ENCODE measurements at regions of chr9 and their contacts with region 1.

Region 1: DNA sequence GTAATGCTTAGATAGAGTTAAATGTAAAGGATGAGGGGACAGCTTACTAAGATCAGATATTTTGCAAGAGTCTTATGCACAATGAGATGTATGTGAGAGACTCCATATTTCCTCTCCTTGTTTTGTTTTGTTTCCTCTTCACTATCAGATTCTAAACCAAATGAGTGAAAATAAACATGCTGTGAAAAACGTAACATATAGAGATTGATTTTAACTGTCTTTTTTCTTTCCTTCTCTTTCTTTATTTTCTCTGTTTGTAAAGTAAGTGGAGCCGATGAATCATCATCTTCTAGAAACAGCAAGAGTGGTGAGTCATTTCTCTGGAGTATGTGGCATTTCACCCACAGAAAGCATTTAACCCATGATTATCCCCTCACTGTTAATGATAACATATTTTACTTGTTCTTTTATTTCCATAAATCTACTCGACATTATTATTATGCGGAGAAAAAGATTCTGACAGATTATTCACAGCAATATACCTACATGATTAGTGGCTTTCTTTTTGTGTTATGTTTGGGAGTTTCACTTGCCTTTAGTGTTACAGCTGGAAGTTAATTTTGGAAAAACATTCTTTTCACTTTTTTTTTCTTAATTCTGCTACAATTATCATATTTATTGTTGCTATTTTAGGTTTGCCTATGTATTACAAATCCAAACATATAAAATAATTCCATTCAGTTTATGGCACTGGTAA is 2.1 kb upstream of the ANXA1 start:
- DNase-seq: no peak
- H3K4me3 Mint-ChIP-seq: peak overlapping the region; percentile 68
- H3K27ac Mint-ChIP-seq: peak overlapping the region; percentile 95
- H3K4me1 Mint-ChIP-seq: peaks cover 77% of the 10 kb centered on the region
- H3K27me3 Mint-ChIP-seq: no peaks in the 10 kb centered on the region

Region 2: GRCh38 chr9:71783120-71783530 is 1366.4 kb before region 1 on chr9:
- intact Hi-C with region 1: loop called (anchors 2 kb)
- DNase-seq: peak; percentile 80
- H3K4me3 Mint-ChIP-seq: peak overlapping the region; percentile 63
- H3K27ac Mint-ChIP-seq: peak overlapping the region; percentile 93
- H3K4me1 Mint-ChIP-seq: peaks cover 42% of the 10 kb centered on the region
- H3K27me3 Mint-ChIP-seq: peaks cover 2% of the 10 kb centered on the region

Region 3: GRCh38 chr9:72473474-72474261 is 675.9 kb before region 1 on chr9:
- intact Hi-C with region 1: loop called (anchors 10 kb)
- DNase-seq: no peak
- H3K4me3 Mint-ChIP-seq: peak overlapping the region; percentile 60
- H3K27ac Mint-ChIP-seq: peak overlapping the region; percentile 90
- H3K4me1 Mint-ChIP-seq: peaks cover 64% of the 10 kb centered on the region
- H3K27me3 Mint-ChIP-seq: no peaks in the 10 kb centered on the region

Region 4: DNA sequence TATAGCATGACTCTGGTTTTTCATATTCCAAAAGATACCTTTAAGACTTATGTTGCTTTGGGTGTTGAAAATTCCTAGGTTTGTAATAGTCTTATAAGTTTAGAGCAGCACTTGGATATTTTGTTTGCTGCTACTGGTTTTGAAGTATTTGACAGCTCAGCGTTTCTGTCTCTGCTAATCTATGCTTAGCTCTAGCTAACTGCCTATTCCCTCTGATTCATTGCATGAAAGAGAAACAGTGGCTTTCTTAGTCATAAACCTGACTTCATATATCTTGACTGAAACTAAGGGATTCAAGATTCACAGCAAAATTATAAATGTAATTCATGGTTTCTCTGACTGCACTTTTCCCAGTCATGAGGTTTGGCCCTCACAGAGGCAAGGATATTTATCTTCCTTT is 33.5 kb before region 1 on chr9:
- intact Hi-C with region 1: loop called (anchors 1 kb)
- DNase-seq: no peak
- H3K4me3 Mint-ChIP-seq: no peak overlapping the region
- H3K27ac Mint-ChIP-seq: no peak overlapping the region
- H3K4me1 Mint-ChIP-seq: peaks cover 38% of the 10 kb centered on the region
- H3K27me3 Mint-ChIP-seq: peaks cover 2% of the 10 kb centered on the region

Region 5: DNA sequence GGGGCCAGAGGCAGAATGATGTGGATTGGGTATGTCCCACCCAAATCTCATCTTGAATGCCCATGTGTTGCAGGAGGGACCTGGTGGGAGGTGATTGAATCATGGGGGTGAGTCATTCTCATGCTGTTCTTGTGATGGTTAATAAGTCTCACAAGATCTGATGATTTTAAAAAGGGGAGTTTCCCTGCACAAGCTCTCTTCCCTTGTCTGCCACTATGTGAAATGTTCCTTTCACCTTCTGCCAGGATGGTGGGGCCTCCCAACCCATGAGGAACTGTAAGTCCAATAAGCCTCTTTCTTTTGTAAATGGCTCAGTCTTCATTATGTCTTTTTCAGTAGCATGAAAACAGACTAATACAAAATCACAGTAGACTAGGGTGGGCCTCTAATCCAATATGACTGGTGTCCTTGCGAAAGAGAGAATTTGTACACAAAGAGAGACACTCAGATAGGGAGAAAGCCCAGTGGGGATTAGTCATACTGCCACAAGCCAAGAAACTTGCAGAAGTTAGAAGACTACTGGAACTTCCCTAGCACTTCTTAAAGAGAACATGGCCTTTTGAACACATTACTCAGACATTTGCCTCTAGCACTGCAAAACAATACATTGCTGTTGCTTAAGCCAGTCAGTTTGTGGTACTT is 70.6 kb after region 1 on chr9:
- intact Hi-C with region 1: loop called (anchors 1 kb)
- DNase-seq: no peak
- H3K4me3 Mint-ChIP-seq: no peak overlapping the region
- H3K27ac Mint-ChIP-seq: peak overlapping the region; percentile 78
- H3K4me1 Mint-ChIP-seq: peaks cover 9% of the 10 kb centered on the region
- H3K27me3 Mint-ChIP-seq: peaks cover 7% of the 10 kb centered on the region

Region 6: DNA sequence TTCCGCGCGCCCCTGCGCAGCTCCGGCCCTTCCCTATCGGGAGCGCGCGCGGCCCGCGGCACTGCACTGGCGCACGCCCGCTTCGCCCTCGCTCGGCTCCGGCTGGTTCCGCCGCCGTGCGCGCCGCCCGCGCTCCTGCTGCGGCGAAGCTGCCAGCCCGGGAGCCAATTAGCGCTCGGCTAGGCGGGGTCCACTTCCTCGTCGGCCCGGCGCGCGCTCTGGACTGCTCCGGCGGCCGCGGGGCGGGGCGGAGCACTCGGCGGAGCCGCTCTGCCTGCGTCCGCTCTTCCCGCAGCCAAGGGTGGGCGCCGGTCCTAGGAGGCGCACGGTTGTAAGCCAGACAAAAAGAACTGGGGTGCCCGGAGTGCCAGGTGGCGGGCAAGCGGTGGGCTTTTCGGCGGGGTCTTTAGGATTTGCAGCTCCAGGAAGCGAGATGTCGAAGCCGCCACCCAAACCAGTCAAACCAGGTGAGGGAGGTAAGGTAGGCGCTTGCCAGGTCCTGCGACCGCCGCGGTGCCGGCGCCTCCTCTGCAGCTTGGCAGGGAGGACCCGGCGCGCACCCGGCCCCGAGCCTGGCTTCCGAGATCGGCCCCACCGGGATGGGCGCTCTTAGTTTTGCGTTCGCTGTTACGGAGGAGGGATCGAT is 1938.9 kb after region 1 on chr9 and contains the start of gene OSTF1:
- intact Hi-C with region 1: loop called (anchors 2 kb)
- DNase-seq: peak; percentile 95
- H3K4me3 Mint-ChIP-seq: peak within 1 kb of the TSS; percentile 99
- H3K27ac Mint-ChIP-seq: peak within 1 kb of the TSS; percentile 97
- H3K4me1 Mint-ChIP-seq: peaks cover 64% of the 10 kb centered on the region
- H3K27me3 Mint-ChIP-seq: no peaks in the 10 kb centered on the region
- total RNA-seq, gene OSTF1: 49.5 and 53.6 TPM in 2 replicates